SK-N-SH (cell line): ENCODE measurements at regions of chr12 and their contacts with region 1.

Region 1: GRCh38 chr12:54005853-54006686 is 2.7 kb upstream of the HOXC8 start:
- DNase-seq: peak; percentile 93
- H3K4me3 ChIP-seq: no peak overlapping the region
- H3K27ac ChIP-seq: no peak overlapping the region
- H3K4me1 ChIP-seq: peaks cover 0 to 23% of the 10 kb centered on the region in 2 experiments; a peak in 1 of 4 replicates
- H3K27me3 ChIP-seq: no peaks in the 10 kb centered on the region
- CTCF ChIP-seq: peak; percentile 89
- EP300 ChIP-seq: no peak
- RAD21 ChIP-seq: peak; percentile 94

Region 2: GRCh38 chr12:54017878-54018467 is 11.9 kb after region 1 on chr12:
- CTCF ChIA-PET with region 1: interaction called, 57 read pairs
- POLR2A ChIA-PET with region 1: interaction called, 11 read pairs
- DNase-seq: peak; percentile 99
- H3K4me3 ChIP-seq: peak overlapping the region; percentile 69 to 85
- H3K27ac ChIP-seq: peak overlapping the region; percentile 89 to 99
- H3K4me1 ChIP-seq: peaks cover 7 to 36% of the 10 kb centered on the region in 2 experiments; a peak in 2 of 4 replicates
- H3K27me3 ChIP-seq: no peaks in the 10 kb centered on the region
- CTCF ChIP-seq: no peak
- EP300 ChIP-seq: peak in 1 of 2 experiments; percentile 30; a peak in 1 of 4 replicates
- RAD21 ChIP-seq: no peak

Region 3: GRCh38 chr12:54191550-54192022 is 185.5 kb after region 1 on chr12:
- CTCF ChIA-PET with region 1: interaction called, 568 read pairs
- POLR2A ChIA-PET with region 1: interaction called, 4 read pairs
- DNase-seq: peak; percentile 83
- H3K4me3 ChIP-seq: peak overlapping the region in 1 of 2 experiments; percentile 46; a peak in 1 of 4 replicates
- H3K27ac ChIP-seq: no peak overlapping the region
- H3K4me1 ChIP-seq: peaks cover 17 to 50% of the 10 kb centered on the region in 2 experiments; a peak in 3 of 4 replicates
- H3K27me3 ChIP-seq: no peaks in the 10 kb centered on the region
- CTCF ChIP-seq: peak; percentile 82
- EP300 ChIP-seq: no peak
- RAD21 ChIP-seq: peak; percentile 94